GM13976 (cell line): ENCODE measurements at regions of chr19 and their contacts with region 1.

Region 1: GRCh38 chr19:18279516-18280273 is 1.7 kb downstream of the JUND start:
- DNase-seq: peak; percentile 98
- CTCF ChIP-seq: peak; percentile 82

Region 2: DNA sequence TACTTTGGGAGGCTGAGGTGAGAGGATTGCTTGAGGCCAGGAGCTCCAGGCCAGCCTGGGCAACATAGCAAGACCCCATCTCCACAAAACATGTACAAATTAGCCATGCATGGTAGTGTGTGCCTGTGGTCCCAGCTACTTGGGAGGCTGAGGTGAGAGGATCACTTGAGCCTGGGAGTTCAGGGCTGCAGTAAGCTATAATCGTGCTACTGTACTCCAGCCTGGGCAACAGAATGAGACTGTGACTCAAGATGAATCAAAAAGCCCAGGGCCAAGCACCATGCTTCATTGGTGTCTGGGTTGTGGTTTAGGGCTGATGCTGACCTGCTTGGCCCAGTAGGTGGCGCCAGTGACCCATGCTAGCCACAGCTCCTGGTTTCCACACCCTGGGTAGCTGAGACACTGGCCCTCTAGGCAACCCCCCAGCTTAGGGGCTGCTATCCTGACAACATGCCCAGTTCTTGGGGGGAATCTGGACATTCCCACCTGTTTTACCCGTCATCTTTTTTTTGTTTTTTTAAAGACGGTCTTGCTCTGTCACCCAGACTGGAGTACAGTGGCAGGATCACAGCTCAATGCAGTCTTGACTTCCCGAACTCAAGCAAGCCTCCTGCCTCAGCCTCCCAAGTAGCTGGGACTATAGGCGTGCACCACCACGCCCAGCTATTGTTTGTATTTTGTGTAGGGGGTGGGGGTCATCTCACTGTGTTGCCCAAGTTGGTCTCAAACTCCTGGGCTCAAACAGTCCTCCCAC is 341.4 kb before region 1 on chr19:
- in situ Hi-C with region 1: no loop called
- DNase-seq: peak; percentile 91
- CTCF ChIP-seq: peak; percentile 90

Region 3: GRCh38 chr19:18328340-18329034 is 48.8 kb after region 1 on chr19:
- in situ Hi-C with region 1: loop called (anchors 5 kb)
- DNase-seq: peak; percentile 95
- CTCF ChIP-seq: peak; percentile 77

Region 4: GRCh38 chr19:18408053-18408476 is 128.4 kb after region 1 on chr19:
- in situ Hi-C with region 1: no loop called
- DNase-seq: peak; percentile 83
- CTCF ChIP-seq: peak; percentile 30